Right lobe of liver (tissue), 6 donors: ENCODE measurements at regions of chr14 and their contacts with region 1.

Region 1: DNA sequence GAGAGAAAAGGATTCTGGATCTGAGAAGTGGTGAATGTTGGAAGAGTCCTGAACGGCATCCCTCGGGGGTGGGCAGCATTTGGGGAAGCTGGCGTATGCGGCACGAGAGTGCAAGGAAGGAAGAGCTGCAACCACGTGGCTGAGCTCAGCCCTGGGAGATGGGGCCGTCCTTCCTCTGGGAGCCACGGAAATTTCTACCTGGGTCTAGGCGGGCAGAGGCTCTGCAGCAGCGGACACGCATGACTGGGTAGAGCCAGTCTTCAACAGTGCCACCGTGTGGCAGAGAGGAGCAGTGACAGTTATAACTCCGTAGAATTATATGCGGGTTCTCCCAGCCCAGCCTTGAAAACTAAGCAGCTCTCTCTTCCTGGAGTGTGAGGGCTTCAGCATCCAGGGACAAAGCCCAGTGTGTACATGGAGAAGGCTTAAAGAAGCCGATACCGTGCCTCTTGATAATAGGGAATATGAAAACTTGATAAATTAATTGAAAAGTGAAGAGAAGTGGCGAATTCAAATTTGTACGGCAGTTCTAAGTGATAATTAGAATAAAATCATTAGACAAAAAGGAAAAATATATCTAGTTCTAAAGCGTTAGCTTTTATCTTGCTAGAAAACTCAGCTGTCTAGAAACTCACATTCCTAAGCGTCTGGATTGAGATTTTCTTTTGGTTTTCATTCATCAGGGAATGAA is 82.9 kb upstream of the STXBP6 start:
- DNase-seq: peak; percentile 62 to 71 (median 68)
- ATAC-seq: peak; percentile 100
- H3K4me3 ChIP-seq: no peak overlapping the region
- H3K27ac ChIP-seq: no peak overlapping the region
- H3K4me1 ChIP-seq: peaks cover 0 to 1% (median 0%) of the 10 kb centered on the region in 4 donors
- H3K27me3 ChIP-seq: no peaks in the 10 kb centered on the region
- CTCF ChIP-seq: peak; percentile 78 to 85 (median 83)
- POLR2A ChIP-seq: no peak

Region 2: DNA sequence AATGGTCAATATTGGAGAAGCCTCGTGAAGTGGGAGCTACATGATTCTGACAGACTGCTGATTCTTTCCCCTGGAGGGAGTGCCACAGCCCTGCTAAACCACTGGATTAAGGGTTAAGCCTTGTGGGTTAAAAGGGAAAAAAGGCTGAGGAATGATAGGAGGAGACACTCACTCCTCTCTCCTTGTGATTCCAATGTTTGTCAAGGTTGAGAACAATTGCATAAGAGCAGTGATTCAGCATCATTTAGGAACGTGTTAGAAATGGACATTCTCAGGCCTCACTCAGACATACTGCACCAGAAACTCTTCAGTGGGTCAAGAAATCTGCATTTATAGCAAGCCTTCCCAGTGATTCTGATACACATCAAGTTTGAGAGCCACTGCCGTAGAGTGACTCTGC is 411.1 kb before region 1 on chr14:
- intact Hi-C with region 1: loop called in 1 of 2 experiments (anchors 10 kb)
- DNase-seq: no peak
- ATAC-seq: no peak
- H3K4me3 ChIP-seq: no peak overlapping the region
- H3K27ac ChIP-seq: no peak overlapping the region
- H3K4me1 ChIP-seq: no peaks in the 10 kb centered on the region
- H3K27me3 ChIP-seq: peaks cover 0 to 4% of the 10 kb centered on the region in 2 donors
- CTCF ChIP-seq: no peak
- POLR2A ChIP-seq: no peak

Region 3: GRCh38 chr14:24734878-24735500 is 397.9 kb before region 1 on chr14:
- intact Hi-C with region 1: loop called in 1 of 2 experiments (anchors 10 kb)
- DNase-seq: no peak
- ATAC-seq: peak; percentile 76 to 82 (median 77)
- H3K4me3 ChIP-seq: no peak overlapping the region
- H3K27ac ChIP-seq: no peak overlapping the region
- H3K4me1 ChIP-seq: no peaks in the 10 kb centered on the region
- H3K27me3 ChIP-seq: no peaks in the 10 kb centered on the region
- CTCF ChIP-seq: peak; percentile 69 to 83 (median 75)
- POLR2A ChIP-seq: no peak

Region 4: DNA sequence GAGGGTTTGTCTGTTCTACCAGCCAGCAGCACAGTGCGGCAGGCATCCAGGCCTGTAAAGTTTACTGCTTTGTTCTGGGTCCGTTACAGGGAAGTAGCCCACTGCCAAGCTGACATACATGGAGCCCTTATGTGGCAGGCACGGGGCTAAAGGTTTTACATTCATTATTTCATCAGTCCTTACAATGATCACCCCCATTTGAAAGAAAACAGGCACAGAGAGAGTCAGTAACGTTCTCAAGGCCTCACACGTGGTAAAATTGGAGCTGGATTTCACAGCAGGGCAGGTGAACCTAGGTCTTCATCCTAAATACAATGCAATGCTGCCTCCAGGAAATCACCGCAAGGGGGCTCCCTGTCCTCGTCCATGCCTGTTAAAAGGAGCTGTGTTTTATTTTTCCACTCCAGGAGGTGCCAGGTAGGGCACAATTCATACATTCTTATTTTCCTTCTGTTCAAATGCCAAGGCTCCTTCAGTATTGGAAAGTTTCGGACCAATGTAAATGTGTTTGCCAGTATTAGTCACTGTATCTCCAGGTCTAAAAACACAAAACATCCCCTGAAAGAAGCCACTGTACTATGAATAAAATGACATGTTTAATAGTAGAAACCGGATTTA is 326.7 kb before region 1 on chr14:
- intact Hi-C with region 1: loop called (anchors 5 to 10 kb)
- DNase-seq: peak; percentile 75 to 81 (median 81)
- ATAC-seq: peak; percentile 68 to 84 (median 78)
- H3K4me3 ChIP-seq: no peak overlapping the region
- H3K27ac ChIP-seq: peak overlapping the region in 1 of 3 donors; percentile 82
- H3K4me1 ChIP-seq: peaks cover 0 to 29% (median 8%) of the 10 kb centered on the region in 4 donors
- H3K27me3 ChIP-seq: no peaks in the 10 kb centered on the region
- CTCF ChIP-seq: peak; percentile 89 to 95 (median 92)
- POLR2A ChIP-seq: no peak

Region 5: DNA sequence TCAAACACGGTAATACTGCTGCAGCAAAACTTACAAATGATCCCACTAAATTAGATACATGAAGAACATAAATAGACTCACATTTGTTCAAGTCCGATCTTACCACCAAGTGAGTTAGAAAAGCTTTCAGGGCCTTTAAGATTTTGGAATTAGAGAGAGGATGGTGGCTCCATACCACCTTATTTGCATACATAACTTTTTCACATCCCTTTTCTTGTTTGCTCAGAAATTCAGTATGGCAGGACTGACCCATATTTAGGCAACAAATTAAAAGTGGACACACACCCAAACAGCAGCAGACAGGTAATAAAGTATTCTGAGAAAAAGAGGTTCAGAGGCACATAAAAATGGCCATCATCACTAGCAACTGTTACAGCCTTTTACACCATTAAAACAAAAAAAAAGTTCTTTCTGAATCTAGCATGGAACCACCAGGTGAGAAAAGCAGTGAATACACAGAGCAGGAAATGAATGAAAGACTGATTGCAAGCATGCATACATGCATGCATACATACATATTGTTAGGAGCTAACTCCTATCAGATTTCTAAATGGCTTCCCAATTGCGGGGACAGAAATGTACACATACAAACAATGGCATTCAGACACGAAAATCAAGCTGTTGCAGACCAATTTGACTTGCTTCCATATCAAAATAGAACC is 106.3 kb before region 1 on chr14:
- intact Hi-C with region 1: no loop called
- DNase-seq: no peak
- ATAC-seq: no peak
- H3K4me3 ChIP-seq: no peak overlapping the region
- H3K27ac ChIP-seq: no peak overlapping the region
- H3K4me1 ChIP-seq: no peaks in the 10 kb centered on the region
- H3K27me3 ChIP-seq: no peaks in the 10 kb centered on the region
- CTCF ChIP-seq: no peak
- POLR2A ChIP-seq: no peak

Region 6: DNA sequence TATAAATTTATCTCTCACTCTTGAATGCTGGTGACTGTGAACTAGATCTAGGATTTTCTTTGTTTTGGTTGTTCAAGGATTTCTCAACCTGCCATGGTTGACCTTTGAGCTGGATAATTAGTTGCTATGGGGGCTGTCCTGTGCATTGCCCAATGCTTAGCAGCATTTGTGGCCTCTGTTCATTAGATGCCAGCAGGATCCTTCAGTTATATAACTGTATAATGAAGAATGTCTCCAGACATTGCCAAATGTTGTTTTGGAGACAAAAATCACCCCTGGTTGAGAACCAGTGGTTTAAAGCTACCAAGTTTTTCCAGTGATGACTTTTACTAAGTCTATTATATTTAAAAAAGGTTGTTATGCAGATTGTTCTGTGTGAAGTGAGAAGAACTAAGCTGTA is 65.0 kb after region 1 on chr14:
- intact Hi-C with region 1: no loop called
- DNase-seq: peak in 2 of 3 donors; percentile 31 to 62
- ATAC-seq: peak; percentile 94 to 99 (median 98)
- H3K4me3 ChIP-seq: no peak overlapping the region
- H3K27ac ChIP-seq: peak overlapping the region in 1 of 3 donors; percentile 22
- H3K4me1 ChIP-seq: peaks cover 0 to 10% (median 4%) of the 10 kb centered on the region in 4 donors
- H3K27me3 ChIP-seq: no peaks in the 10 kb centered on the region
- CTCF ChIP-seq: no peak
- POLR2A ChIP-seq: no peak